ENCODE measurements at regions of chr12 and their contacts with region 1.

Region 1: DNA sequence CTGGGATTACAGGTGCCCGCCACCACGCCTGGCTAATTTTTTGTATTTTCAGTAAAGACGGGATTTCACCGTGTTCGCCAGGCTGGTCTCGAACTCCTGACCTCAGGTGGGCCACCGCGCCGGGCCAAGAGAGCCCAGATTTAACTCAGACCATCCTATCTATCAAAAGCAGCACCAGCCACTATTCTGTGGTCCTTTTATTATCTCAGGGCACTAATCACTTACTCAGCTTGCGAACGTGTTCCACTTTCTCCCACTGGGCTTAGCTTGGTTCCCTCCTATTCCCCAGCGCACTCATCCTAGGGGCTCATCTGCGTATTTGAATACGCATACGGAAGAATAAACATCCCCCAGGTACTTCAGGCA is 16.2 kb upstream of the AACS start:
- DNase-seq: no peak
- H3K4me3 ChIP-seq: peak overlapping the region; percentile 58 to 95
- H3K4me3 Mint-ChIP-seq: peak overlapping the region; percentile 86 to 94 (median 90)
- H3K27ac ChIP-seq: peak overlapping the region; percentile 49
- H3K27ac Mint-ChIP-seq: peak overlapping the region; percentile 44 to 93 (median 88)
- H3K4me1 ChIP-seq: peaks cover 4% of the 10 kb centered on the region
- H3K4me1 Mint-ChIP-seq: peaks cover 2 to 18% (median 7%) of the 10 kb centered on the region in 4 donors
- H3K27me3 ChIP-seq: no peaks in the 10 kb centered on the region
- H3K27me3 Mint-ChIP-seq: no peaks in the 10 kb centered on the region

Region 2: GRCh38 chr12:125065021-125065795 is 16.1 kb after region 1 on chr12 and contains the start of gene AACS:
- CTCF ChIA-PET with region 1: interaction called, 6 read pairs
- POLR2A ChIA-PET with region 1: interaction called, 14 read pairs
- intact Hi-C with region 1: loop called (anchors 1 kb)
- DNase-seq: peak; percentile 64 to 73 (median 68)
- H3K4me3 ChIP-seq: peak within 1 kb of the TSS; percentile 30 to 58
- H3K4me3 Mint-ChIP-seq: peak within 1 kb of the TSS; percentile 83 to 96 (median 88)
- H3K27ac ChIP-seq: peak within 1 kb of the TSS; percentile 56
- H3K27ac Mint-ChIP-seq: peak within 1 kb of the TSS; percentile 66 to 93 (median 82)
- H3K4me1 ChIP-seq: peaks cover 15% of the 10 kb centered on the region
- H3K4me1 Mint-ChIP-seq: peaks cover 11 to 21% (median 13%) of the 10 kb centered on the region in 4 donors
- H3K27me3 ChIP-seq: peaks cover 7% of the 10 kb centered on the region
- H3K27me3 Mint-ChIP-seq: peaks cover under 1 to 2% of the 10 kb centered on the region in 2 donors
- total RNA-seq, gene AACS: 11.8 to 12.2 TPM